ENCODE measurements at regions of chr6 and their contacts with region 1.

Region 1: DNA sequence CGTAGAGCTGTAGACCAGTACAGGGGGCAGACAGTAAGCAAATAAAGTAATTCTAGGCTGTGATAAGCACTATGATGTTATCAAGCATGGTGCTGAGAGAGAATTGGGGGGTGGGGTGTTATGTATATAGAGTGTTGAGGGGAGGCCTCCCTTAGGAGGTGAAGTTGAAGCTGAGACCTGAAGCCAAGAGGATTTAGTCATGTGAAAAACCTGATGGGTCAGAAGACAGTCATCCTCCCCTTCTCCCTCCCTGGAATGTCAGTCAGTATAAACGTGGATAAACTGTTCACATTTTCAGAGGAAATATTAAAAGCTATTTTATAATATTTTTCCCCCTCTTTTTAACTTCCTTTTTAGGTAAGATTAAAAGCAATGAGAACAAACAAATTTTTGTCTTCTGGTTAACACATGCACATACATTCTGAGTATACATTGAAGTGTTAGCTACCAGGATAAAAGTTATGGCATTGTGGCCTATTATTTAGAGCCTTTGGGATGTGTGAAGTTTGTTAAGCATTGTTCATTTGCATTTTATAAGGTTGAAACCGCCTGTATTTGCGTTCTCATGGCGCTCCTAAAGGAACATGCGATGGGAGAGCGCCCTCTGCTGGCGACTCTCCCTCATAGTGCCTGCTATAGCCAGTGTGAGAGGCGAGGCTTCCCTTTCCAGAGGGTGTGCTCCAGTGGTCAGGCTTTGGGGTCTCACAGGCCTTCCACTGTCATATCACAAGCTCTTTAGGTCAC is 35.4 kb upstream of the MAPK13 start:
- DNase-seq: peak; percentile 74 to 92 (median 79)
- ATAC-seq: peak; percentile 67
- H3K4me3 ChIP-seq: no peak overlapping the region
- H3K4me3 Mint-ChIP-seq: no peak overlapping the region
- H3K27ac ChIP-seq: peak overlapping the region; percentile 4 to 33
- H3K27ac Mint-ChIP-seq: peak overlapping the region; percentile 78
- H3K4me1 ChIP-seq: peaks cover 16% of the 10 kb centered on the region
- H3K4me1 Mint-ChIP-seq: peaks cover 45% of the 10 kb centered on the region
- H3K27me3 ChIP-seq: no peaks in the 10 kb centered on the region
- H3K27me3 Mint-ChIP-seq: no peaks in the 10 kb centered on the region
- CTCF ChIP-seq: peak; percentile 99

Region 2: GRCh38 chr6:36067374-36068011 is 27.4 kb before region 1 on chr6:
- CTCF ChIA-PET with region 1: interaction called, 11 read pairs
- POLR2A ChIA-PET with region 1: no interaction called
- intact Hi-C with region 1: no loop called
- DNase-seq: no peak
- ATAC-seq: no peak
- H3K4me3 ChIP-seq: no peak overlapping the region
- H3K4me3 Mint-ChIP-seq: no peak overlapping the region
- H3K27ac ChIP-seq: no peak overlapping the region
- H3K27ac Mint-ChIP-seq: peak overlapping the region; percentile 63
- H3K4me1 ChIP-seq: peaks cover 6% of the 10 kb centered on the region
- H3K4me1 Mint-ChIP-seq: peaks cover 73% of the 10 kb centered on the region
- H3K27me3 ChIP-seq: no peaks in the 10 kb centered on the region
- H3K27me3 Mint-ChIP-seq: no peaks in the 10 kb centered on the region
- CTCF ChIP-seq: no peak

Region 3: DNA sequence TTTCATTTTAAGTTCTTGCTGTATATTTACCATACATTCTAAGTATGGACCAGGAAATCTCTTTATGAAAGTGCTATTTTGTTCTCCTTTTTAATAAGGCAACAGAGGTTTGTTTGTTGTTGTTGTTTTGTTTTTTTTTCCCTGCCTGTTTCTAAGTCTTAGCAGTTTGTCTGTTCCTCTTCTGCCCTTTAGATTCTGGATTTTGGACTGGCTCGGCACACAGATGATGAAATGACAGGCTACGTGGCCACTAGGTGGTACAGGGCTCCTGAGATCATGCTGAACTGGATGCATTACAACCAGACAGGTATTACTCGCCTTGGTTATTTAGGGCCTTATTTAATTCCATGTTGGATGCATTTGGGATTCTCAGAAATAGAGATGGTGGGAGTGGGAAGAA is 19.3 kb before region 1 on chr6:
- CTCF ChIA-PET with region 1: interaction called, 3 read pairs
- POLR2A ChIA-PET with region 1: interaction called, 3 read pairs
- intact Hi-C with region 1: loop called in 1 of 2 experiments (anchors 2 kb)
- DNase-seq: peak in 7 of 14 experiments; percentile 5 to 48 (median 24)
- ATAC-seq: peak; percentile 65
- H3K4me3 ChIP-seq: no peak overlapping the region
- H3K4me3 Mint-ChIP-seq: no peak overlapping the region
- H3K27ac ChIP-seq: no peak overlapping the region
- H3K27ac Mint-ChIP-seq: peak overlapping the region; percentile 40
- H3K4me1 ChIP-seq: no peaks in the 10 kb centered on the region
- H3K4me1 Mint-ChIP-seq: peaks cover 20% of the 10 kb centered on the region
- H3K27me3 ChIP-seq: no peaks in the 10 kb centered on the region
- H3K27me3 Mint-ChIP-seq: no peaks in the 10 kb centered on the region
- CTCF ChIP-seq: peak; percentile 39

Region 4: GRCh38 chr6:36109092-36109491 is 14.2 kb after region 1 on chr6:
- CTCF ChIA-PET with region 1: interaction called, 5 read pairs
- POLR2A ChIA-PET with region 1: interaction called, 13 read pairs
- intact Hi-C with region 1: no loop called
- DNase-seq: peak in 10 of 14 experiments; percentile 20 to 84 (median 47)
- ATAC-seq: peak; percentile 94
- H3K4me3 ChIP-seq: no peak overlapping the region
- H3K4me3 Mint-ChIP-seq: peak overlapping the region; percentile 0
- H3K27ac ChIP-seq: peak overlapping the region; percentile 56 to 58
- H3K27ac Mint-ChIP-seq: peak overlapping the region; percentile 93
- H3K4me1 ChIP-seq: peaks cover 34% of the 10 kb centered on the region
- H3K4me1 Mint-ChIP-seq: peaks cover 50% of the 10 kb centered on the region
- H3K27me3 ChIP-seq: no peaks in the 10 kb centered on the region
- H3K27me3 Mint-ChIP-seq: no peaks in the 10 kb centered on the region
- CTCF ChIP-seq: no peak

Region 5: GRCh38 chr6:36131511-36132245 is 36.8 kb after region 1 on chr6:
- CTCF ChIA-PET with region 1: interaction called, 6 read pairs
- POLR2A ChIA-PET with region 1: interaction called, 28 read pairs
- intact Hi-C with region 1: loop called (anchors 2 to 5 kb)
- DNase-seq: peak in 11 of 14 experiments; percentile 25 to 76 (median 40)
- ATAC-seq: peak; percentile 73
- H3K4me3 ChIP-seq: peak overlapping the region; percentile 83
- H3K4me3 Mint-ChIP-seq: peak overlapping the region; percentile 93
- H3K27ac ChIP-seq: peak overlapping the region; percentile 82 to 88
- H3K27ac Mint-ChIP-seq: peak overlapping the region; percentile 95
- H3K4me1 ChIP-seq: peaks cover 51% of the 10 kb centered on the region
- H3K4me1 Mint-ChIP-seq: peaks cover 44% of the 10 kb centered on the region
- H3K27me3 ChIP-seq: no peaks in the 10 kb centered on the region
- H3K27me3 Mint-ChIP-seq: no peaks in the 10 kb centered on the region
- CTCF ChIP-seq: peak; percentile 9

Region 6: DNA sequence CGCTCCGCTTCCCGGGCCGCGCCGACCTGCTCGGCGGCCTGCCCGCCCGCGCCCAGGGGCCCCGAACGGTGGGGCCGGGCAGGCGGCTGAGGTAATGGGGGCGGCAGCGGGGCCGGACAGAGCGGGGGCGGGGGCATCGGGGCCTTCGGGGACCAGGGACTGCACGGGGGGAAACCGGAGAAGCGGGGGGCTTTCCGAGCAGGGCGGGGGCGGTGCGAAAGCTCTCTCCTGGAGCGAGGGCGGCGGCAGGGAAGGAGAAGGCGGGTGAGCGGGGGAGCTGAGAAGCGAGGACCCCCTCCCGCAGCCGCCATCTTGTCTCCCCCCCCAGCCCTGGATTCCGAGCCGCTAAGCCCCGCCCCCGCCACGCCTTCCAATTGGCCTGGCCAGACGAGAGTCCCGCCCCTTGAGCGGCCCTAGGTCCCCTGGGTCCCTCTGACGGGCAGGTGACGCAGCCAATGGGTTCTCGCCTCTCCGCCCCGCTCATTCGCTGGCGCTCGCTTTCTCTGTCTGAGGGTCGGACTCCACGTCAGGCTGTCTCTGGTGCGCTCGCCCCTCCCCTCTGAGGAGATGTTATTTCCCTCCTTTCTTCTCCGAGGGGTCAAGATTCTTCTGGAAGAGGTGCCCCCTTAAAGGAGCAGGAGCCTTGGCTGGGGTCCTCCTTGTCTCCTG is 102.1 kb after region 1 on chr6:
- CTCF ChIA-PET with region 1: interaction called, 6 read pairs
- POLR2A ChIA-PET with region 1: no interaction called
- intact Hi-C with region 1: loop called (anchors 1 to 2 kb)
- DNase-seq: peak; percentile 99 to 100 (median 100)
- ATAC-seq: peak; percentile 87
- H3K4me3 ChIP-seq: peak overlapping the region; percentile 68
- H3K4me3 Mint-ChIP-seq: peak overlapping the region; percentile 96
- H3K27ac ChIP-seq: peak overlapping the region; percentile 65 to 79
- H3K27ac Mint-ChIP-seq: peak overlapping the region; percentile 96
- H3K4me1 ChIP-seq: peaks cover 48% of the 10 kb centered on the region
- H3K4me1 Mint-ChIP-seq: peaks cover 61% of the 10 kb centered on the region
- H3K27me3 ChIP-seq: no peaks in the 10 kb centered on the region
- H3K27me3 Mint-ChIP-seq: no peaks in the 10 kb centered on the region
- CTCF ChIP-seq: no peak

Region 7: DNA sequence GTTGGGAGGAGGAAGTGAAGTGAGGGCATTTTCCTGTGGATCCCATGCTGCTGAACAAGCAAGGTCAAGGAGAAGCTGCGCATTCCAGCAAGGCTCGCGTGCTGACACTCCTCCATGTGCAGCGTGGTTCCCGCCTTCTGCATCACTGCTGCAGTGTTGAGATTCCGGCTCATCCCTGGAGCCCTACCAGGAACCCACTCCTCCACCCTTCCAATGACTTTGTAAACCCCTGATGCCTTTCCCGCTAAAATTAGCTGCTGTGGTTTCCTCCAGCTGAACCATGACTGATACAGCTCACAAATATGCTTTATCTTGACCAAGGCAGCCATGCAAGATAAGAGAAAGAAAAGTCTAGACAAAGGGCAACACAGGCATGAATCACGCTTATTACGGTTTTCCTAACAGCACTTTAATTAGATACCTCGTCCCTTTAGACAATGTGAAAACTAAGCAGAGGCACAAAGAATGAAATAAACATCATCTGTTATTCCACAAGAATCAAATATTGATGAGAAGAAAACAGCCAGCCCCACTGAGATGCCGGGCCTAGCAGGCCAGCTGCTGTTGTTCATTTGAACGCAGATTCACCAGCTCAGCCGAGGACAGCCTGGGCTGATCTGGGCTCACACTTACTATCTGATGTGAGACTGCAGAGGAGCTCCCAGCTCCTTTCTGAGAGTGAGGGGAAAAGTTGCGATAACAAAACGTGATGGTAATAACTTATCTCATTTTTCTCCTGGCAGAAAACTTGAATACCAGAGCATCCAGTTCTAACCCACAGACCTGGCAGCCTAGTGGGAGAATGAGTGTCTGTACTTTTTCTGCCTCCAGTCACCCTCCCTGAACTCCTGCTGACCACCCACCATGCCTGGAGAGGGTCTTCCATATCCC is 256.0 kb after region 1 on chr6:
- CTCF ChIA-PET with region 1: no interaction called
- POLR2A ChIA-PET with region 1: no interaction called
- intact Hi-C with region 1: loop called in 1 of 2 experiments (anchors 10 kb)
- DNase-seq: no peak
- ATAC-seq: no peak
- H3K4me3 ChIP-seq: no peak overlapping the region
- H3K4me3 Mint-ChIP-seq: no peak overlapping the region
- H3K27ac ChIP-seq: no peak overlapping the region
- H3K27ac Mint-ChIP-seq: no peak overlapping the region
- H3K4me1 ChIP-seq: no peaks in the 10 kb centered on the region
- H3K4me1 Mint-ChIP-seq: no peaks in the 10 kb centered on the region
- H3K27me3 ChIP-seq: no peaks in the 10 kb centered on the region
- H3K27me3 Mint-ChIP-seq: no peaks in the 10 kb centered on the region
- CTCF ChIP-seq: no peak

Measured in CD4-positive, alpha-beta T cell (primary cell).